Esophagus muscularis mucosa (tissue), 4 donors: ENCODE measurements at regions of chr10 and their contacts with region 1.

Region 1: GRCh38 chr10:75408911-75409885 is 7.6 kb upstream of the ZNF503 start:
- DNase-seq: no peak
- H3K4me3 ChIP-seq: peak overlapping the region; percentile 78 to 93 (median 82)
- H3K27ac ChIP-seq: peak overlapping the region; percentile 99 to 100 (median 100)
- H3K4me1 ChIP-seq: peaks cover 17 to 56% (median 48%) of the 10 kb centered on the region in 4 donors
- H3K27me3 ChIP-seq: peaks cover 0 to 11% (median 0%) of the 10 kb centered on the region in 4 donors
- CTCF ChIP-seq: no peak
- EP300 ChIP-seq: no peak
- POLR2A ChIP-seq: peak; percentile 27

Region 2: GRCh38 chr10:75062506-75063299 is 346.5 kb before region 1 on chr10:
- intact Hi-C with region 1: no loop called
- DNase-seq: no peak
- H3K4me3 ChIP-seq: no peak overlapping the region
- H3K27ac ChIP-seq: peak overlapping the region in 2 of 4 donors; percentile 11 to 29
- H3K4me1 ChIP-seq: peaks cover 0 to 33% (median 16%) of the 10 kb centered on the region in 4 donors
- H3K27me3 ChIP-seq: no peaks in the 10 kb centered on the region
- CTCF ChIP-seq: no peak
- EP300 ChIP-seq: no peak
- POLR2A ChIP-seq: no peak

Region 3: GRCh38 chr10:75450644-75451640 is 41.7 kb after region 1 on chr10:
- intact Hi-C with region 1: no loop called
- DNase-seq: no peak
- H3K4me3 ChIP-seq: no peak overlapping the region
- H3K27ac ChIP-seq: no peak overlapping the region
- H3K4me1 ChIP-seq: peaks cover 0 to 15% (median 9%) of the 10 kb centered on the region in 4 donors
- H3K27me3 ChIP-seq: no peaks in the 10 kb centered on the region
- CTCF ChIP-seq: no peak
- EP300 ChIP-seq: no peak
- POLR2A ChIP-seq: no peak

Region 4: GRCh38 chr10:76086761-76087639 is 677.8 kb after region 1 on chr10:
- intact Hi-C with region 1: loop called (anchors 5 kb)
- DNase-seq: no peak
- H3K4me3 ChIP-seq: no peak overlapping the region
- H3K27ac ChIP-seq: peak overlapping the region; percentile 53 to 65 (median 62)
- H3K4me1 ChIP-seq: peaks cover 0 to 31% (median 29%) of the 10 kb centered on the region in 4 donors
- H3K27me3 ChIP-seq: no peaks in the 10 kb centered on the region
- CTCF ChIP-seq: peak; percentile 52 to 82 (median 72)
- EP300 ChIP-seq: no peak
- POLR2A ChIP-seq: no peak